GM10248 (cell line): ENCODE measurements at regions of chr1 and their contacts with region 1.

Region 1: DNA sequence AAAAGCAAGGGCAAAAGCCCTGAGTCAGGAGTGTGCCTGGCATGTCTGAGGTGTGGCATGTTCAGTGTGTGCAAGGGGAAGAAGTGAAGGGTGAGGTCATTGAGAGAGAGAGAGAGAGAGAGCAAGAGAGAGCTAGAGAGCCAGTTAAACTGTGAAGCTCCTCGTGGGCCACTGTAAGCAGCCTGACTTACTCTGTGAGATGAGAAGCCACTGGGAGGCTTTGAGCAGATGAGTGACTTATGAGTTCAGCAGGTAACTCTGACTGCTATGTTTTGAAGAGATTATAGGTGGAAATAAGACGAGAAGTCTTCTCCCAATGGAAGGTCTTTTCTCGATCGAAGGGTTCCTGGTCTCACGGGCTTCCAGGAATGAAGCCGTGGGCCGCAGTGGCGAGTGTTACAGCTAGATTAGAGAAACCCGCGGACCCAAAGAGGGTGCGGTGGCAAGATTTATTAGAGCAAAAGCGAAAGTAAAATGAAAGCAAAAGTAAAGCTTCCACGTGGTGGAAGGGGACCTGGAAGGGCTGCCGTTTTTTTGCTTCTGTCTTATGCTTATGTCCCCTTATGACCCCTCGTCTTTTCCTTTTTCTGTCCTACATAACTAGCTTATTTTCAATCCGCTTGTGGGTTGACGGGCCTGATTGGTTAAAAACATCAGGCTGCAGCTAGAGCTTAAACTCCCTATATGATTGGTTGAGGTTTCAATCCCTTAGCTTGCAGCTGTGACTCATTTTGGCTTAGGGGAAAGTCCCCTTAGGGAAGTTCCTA is 323.1 kb upstream of the FAM78B start:
- DNase-seq: peak; percentile 22
- CTCF ChIP-seq: no peak

Region 2: DNA sequence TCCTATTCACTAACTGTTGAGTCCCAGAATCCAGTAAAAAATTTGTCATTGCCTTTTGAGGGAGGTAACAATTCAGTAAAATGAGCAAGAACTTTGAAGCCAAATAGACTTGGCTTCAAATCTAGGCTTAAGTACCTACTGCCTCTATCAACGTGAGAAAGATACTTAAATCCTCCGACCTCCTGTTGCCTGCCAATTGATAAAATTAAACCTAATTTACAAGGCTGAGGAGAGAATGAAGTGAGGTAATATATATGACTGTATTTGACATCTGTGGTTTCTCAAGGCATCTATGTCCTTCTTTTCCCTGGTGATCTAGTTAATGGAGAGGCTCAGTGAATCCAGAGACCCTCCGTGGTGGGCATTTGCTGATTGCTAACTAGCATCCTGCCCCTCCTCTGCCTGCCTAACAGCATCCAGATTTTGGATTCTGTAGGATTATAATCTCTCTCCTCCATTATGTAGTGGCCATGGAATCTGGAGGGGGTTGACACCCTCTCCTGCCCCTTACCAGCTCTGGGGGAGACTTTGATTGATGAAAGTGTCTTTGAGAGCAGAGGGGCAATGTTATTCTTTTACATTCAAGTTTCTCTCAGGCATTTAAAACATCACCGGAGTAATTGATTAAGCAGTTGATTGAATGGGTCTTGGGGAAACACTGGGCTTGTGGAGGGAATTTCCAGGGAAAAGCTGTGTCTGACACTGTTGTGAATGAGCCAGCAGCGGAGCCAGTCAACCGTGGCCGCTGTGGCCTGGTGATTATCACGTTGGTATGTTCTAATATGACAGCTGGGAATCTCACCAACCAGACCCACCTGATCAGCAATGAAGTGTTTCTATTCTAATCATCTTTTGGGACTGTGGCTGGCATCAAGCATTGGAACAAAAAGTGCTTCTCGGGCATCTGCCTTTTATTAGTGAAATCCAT is 182.3 kb before region 1 on chr1:
- CTCF ChIA-PET with region 1: no interaction called
- POLR2A ChIA-PET with region 1: no interaction called
- DNase-seq: no peak
- CTCF ChIP-seq: no peak

Region 3: DNA sequence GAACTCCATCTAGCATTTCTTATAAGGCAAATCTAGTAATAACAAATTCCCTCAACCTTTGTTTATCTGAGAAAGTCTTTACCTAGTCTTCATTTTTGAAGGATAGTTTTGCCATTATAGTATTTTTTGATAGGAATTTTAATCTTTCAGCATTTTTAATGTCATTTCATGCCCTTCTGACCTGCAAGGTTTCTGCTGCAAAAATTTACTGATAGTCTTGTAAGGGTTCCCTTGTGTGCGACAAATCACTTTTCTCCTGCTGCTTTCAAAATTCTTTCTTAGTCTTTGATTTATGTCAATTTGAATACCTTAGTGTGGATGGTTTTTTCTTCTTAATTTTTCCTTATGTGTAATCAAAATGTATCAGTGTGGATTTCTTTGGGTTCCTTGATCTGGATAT is 25.5 kb before region 1 on chr1:
- CTCF ChIA-PET with region 1: no interaction called
- POLR2A ChIA-PET with region 1: no interaction called
- DNase-seq: no peak
- CTCF ChIP-seq: no peak

Region 4: GRCh38 chr1:166479052-166479631 is 10.7 kb before region 1 on chr1:
- CTCF ChIA-PET with region 1: interaction called, 77 read pairs
- POLR2A ChIA-PET with region 1: interaction called, 3 read pairs
- DNase-seq: peak; percentile 41
- CTCF ChIP-seq: peak; percentile 78